MCF 10A (cell line): ENCODE measurements at regions of chr7 and their contacts with region 1.

Region 1: GRCh38 chr7:107972075-107972482 is 30.9 kb downstream of the LAMB1 start:
- DNase-seq: peak; percentile 91
- H3K4me3 Mint-ChIP-seq: peak overlapping the region; percentile 36
- H3K27ac Mint-ChIP-seq: peak overlapping the region; percentile 88
- H3K4me1 Mint-ChIP-seq: peaks cover 36% of the 10 kb centered on the region
- H3K27me3 Mint-ChIP-seq: no peaks in the 10 kb centered on the region
- CTCF ChIP-seq: no peak

Region 2: GRCh38 chr7:107890962-107891635 is 81.0 kb before region 1 on chr7 and contains the start of gene DLD:
- CTCF ChIA-PET with region 1: no interaction called
- POLR2A ChIA-PET with region 1: interaction called, 12 read pairs
- intact Hi-C with region 1: no loop called
- DNase-seq: peak; percentile 88
- H3K4me3 Mint-ChIP-seq: peak within 1 kb of the TSS; percentile 86
- H3K27ac Mint-ChIP-seq: peak within 1 kb of the TSS; percentile 95
- H3K4me1 Mint-ChIP-seq: peaks cover 26% of the 10 kb centered on the region
- H3K27me3 Mint-ChIP-seq: peaks cover 2% of the 10 kb centered on the region
- CTCF ChIP-seq: no peak
- total RNA-seq, gene DLD: 83.0 and 85.7 TPM in 2 replicates

Region 3: DNA sequence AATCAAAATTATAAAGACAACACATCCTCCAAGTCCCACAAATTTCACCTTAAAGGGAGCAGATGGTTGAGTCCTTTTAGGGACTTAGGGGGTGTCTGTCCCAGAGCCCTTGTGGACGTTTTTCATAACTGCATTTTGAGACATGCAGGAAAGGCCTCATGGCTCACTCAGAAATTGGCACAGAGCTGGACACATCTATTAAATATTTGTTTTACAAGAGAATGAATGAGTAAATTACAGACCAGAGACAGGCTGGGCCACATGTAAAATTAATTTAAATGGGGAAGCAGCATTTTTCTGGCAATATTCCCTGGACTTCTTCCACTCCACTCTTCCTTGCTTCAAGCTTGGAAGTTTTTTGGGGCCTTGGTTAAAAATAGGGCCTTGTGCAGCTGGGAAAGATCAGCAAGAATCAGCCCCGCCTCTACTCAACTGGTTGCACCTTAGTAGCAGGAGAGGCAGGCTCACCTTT is 10.9 kb after region 1 on chr7:
- CTCF ChIA-PET with region 1: interaction called, 4 read pairs
- POLR2A ChIA-PET with region 1: interaction called, 117 read pairs
- intact Hi-C with region 1: no loop called
- DNase-seq: no peak
- H3K4me3 Mint-ChIP-seq: no peak overlapping the region
- H3K27ac Mint-ChIP-seq: no peak overlapping the region
- H3K4me1 Mint-ChIP-seq: peaks cover 11% of the 10 kb centered on the region
- H3K27me3 Mint-ChIP-seq: no peaks in the 10 kb centered on the region
- CTCF ChIP-seq: no peak

Region 4: DNA sequence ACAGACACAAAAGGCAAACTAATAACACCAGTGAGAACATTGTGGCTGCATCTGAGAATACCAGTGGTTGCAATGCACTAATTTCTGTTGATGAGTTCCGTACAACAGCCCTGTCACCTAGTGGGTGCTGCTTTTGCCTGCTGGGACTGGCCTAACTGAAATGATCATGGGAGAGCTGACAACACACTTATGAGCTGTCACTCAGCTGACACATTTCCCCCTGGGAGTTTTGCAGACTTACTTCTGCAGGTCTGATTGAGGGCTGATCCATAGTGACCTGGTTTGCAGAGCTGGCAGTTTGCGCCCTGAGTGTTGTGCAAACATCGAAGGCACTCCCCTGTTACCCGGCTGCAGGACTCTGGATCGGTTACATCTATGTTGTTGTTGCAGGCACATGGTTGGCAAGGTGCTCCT is 91.4 kb after region 1 on chr7:
- CTCF ChIA-PET with region 1: no interaction called
- POLR2A ChIA-PET with region 1: interaction called, 19 read pairs
- intact Hi-C with region 1: no loop called
- DNase-seq: peak; percentile 73
- H3K4me3 Mint-ChIP-seq: no peak overlapping the region
- H3K27ac Mint-ChIP-seq: peak overlapping the region; percentile 16
- H3K4me1 Mint-ChIP-seq: peaks cover 11% of the 10 kb centered on the region
- H3K27me3 Mint-ChIP-seq: no peaks in the 10 kb centered on the region
- CTCF ChIP-seq: no peak